ENCODE measurements at regions of chr19 and their contacts with region 1.

Region 1: GRCh38 chr19:11148001-11148400 is 7.6 kb downstream of the SPC24 start:
- DNase-seq: no peak
- ATAC-seq: no peak
- H3K4me3 ChIP-seq: no peak overlapping the region
- H3K4me3 Mint-ChIP-seq: no peak overlapping the region
- H3K27ac ChIP-seq: no peak overlapping the region
- H3K27ac Mint-ChIP-seq: no peak overlapping the region
- H3K4me1 ChIP-seq: peaks cover 5% of the 10 kb centered on the region
- H3K4me1 Mint-ChIP-seq: no peaks in the 10 kb centered on the region
- H3K27me3 ChIP-seq: no peaks in the 10 kb centered on the region
- H3K27me3 Mint-ChIP-seq: no peaks in the 10 kb centered on the region
- CTCF ChIP-seq: no peak

Region 2: GRCh38 chr19:11166281-11167142 is 18.5 kb after region 1 on chr19:
- CTCF ChIA-PET with region 1: no interaction called
- POLR2A ChIA-PET with region 1: no interaction called
- intact Hi-C with region 1: loop called in 1 of 2 experiments (anchors 1 kb)
- DNase-seq: no peak
- ATAC-seq: no peak
- H3K4me3 ChIP-seq: no peak overlapping the region
- H3K4me3 Mint-ChIP-seq: no peak overlapping the region
- H3K27ac ChIP-seq: no peak overlapping the region
- H3K27ac Mint-ChIP-seq: no peak overlapping the region
- H3K4me1 ChIP-seq: no peaks in the 10 kb centered on the region
- H3K4me1 Mint-ChIP-seq: no peaks in the 10 kb centered on the region
- H3K27me3 ChIP-seq: no peaks in the 10 kb centered on the region
- H3K27me3 Mint-ChIP-seq: no peaks in the 10 kb centered on the region
- CTCF ChIP-seq: no peak

Region 3: GRCh38 chr19:11242864-11243797 is 95.1 kb after region 1 on chr19:
- CTCF ChIA-PET with region 1: no interaction called
- POLR2A ChIA-PET with region 1: no interaction called
- intact Hi-C with region 1: no loop called
- DNase-seq: peak; percentile 71 to 87 (median 78)
- ATAC-seq: peak; percentile 99
- H3K4me3 ChIP-seq: no peak overlapping the region
- H3K4me3 Mint-ChIP-seq: no peak overlapping the region
- H3K27ac ChIP-seq: no peak overlapping the region
- H3K27ac Mint-ChIP-seq: no peak overlapping the region
- H3K4me1 ChIP-seq: peaks cover 9% of the 10 kb centered on the region
- H3K4me1 Mint-ChIP-seq: peaks cover 5% of the 10 kb centered on the region
- H3K27me3 ChIP-seq: peaks cover 5 to 15% of the 10 kb centered on the region in 2 experiments
- H3K27me3 Mint-ChIP-seq: peaks cover 46% of the 10 kb centered on the region
- CTCF ChIP-seq: peak; percentile 67